ENCODE measurements at regions of chr17 and their contacts with region 1.

Region 1: GRCh38 chr17:42019509-42020404 is at the start of gene NKIRAS2:
- DNase-seq: peak; percentile 82 to 94 (median 94)
- ATAC-seq: peak; percentile 80
- H3K4me3 ChIP-seq: peak within 1 kb of the TSS; percentile 69 to 83
- H3K4me3 Mint-ChIP-seq: peak within 1 kb of the TSS; percentile 97
- H3K27ac ChIP-seq: peak within 1 kb of the TSS; percentile 34 to 76
- H3K27ac Mint-ChIP-seq: peak within 1 kb of the TSS; percentile 87
- H3K4me1 ChIP-seq: peaks cover 48% of the 10 kb centered on the region
- H3K4me1 Mint-ChIP-seq: peaks cover 62% of the 10 kb centered on the region
- H3K27me3 ChIP-seq: no peaks in the 10 kb centered on the region
- H3K27me3 Mint-ChIP-seq: no peaks in the 10 kb centered on the region
- CTCF ChIP-seq: peak; percentile 91
- total RNA-seq, gene NKIRAS2: 13.2 to 14.8 TPM

Region 2: DNA sequence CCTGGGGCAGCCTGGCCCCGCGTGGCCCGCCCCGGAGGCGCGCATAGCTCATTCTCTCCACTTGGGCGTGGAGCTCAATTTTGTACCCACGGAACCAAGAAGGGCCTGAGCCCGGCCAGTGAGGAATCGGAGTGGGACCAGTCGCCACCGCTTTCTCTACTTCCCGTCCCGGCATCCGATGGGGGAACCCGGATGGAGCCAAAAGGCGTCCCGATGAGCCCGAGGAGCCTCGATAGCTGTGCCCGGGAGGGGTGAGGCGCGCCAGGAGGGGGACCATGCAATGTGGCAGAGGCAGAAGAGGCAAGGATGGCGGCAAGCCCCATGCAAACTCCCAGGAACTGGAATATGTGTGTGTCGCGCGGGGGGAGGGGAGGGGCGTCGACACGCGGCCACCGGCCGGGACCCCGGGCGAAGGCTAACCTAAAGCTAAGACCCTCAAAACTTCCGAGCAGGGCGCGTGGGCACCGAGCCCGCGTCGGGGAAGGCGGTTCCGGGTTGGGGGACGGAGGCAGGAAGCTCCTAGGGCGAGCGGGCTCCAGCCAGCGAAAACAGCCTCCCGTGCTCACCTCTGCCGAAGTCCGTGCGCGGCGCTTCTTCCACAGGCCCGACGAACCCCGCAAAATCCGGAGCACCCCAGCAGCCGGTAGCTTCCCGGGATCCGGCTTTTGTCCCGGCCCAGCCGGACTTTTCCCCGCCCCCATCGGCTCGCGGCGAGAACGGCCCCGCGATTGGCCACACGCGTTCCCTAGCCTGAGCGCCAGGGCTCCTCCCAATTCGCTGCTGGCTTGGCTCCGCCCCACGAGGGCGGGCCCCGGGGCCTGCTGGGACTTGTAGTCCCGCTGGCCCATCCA is 101.2 kb before region 1 on chr17 and contains the start of gene ACLY:
- CTCF ChIA-PET with region 1: interaction called, 3 read pairs
- POLR2A ChIA-PET with region 1: interaction called, 4 read pairs
- intact Hi-C with region 1: loop called (anchors 2 to 5 kb)
- DNase-seq: peak; percentile 89 to 97 (median 95)
- ATAC-seq: peak; percentile 99
- H3K4me3 ChIP-seq: peak within 1 kb of the TSS; percentile 94 to 100
- H3K4me3 Mint-ChIP-seq: peak within 1 kb of the TSS; percentile 90
- H3K27ac ChIP-seq: peak within 1 kb of the TSS; percentile 82 to 86
- H3K27ac Mint-ChIP-seq: peak within 1 kb of the TSS; percentile 81
- H3K4me1 ChIP-seq: peaks cover 17% of the 10 kb centered on the region
- H3K4me1 Mint-ChIP-seq: peaks cover 32% of the 10 kb centered on the region
- H3K27me3 ChIP-seq: no peaks in the 10 kb centered on the region
- H3K27me3 Mint-ChIP-seq: no peaks in the 10 kb centered on the region
- CTCF ChIP-seq: no peak
- total RNA-seq, gene ACLY: 24.9 to 25.0 TPM

Region 3: GRCh38 chr17:42039794-42040763 is 20.3 kb after region 1 on chr17:
- CTCF ChIA-PET with region 1: interaction called, 23 read pairs
- POLR2A ChIA-PET with region 1: no interaction called
- intact Hi-C with region 1: no loop called
- DNase-seq: no peak
- ATAC-seq: no peak
- H3K4me3 ChIP-seq: no peak overlapping the region
- H3K4me3 Mint-ChIP-seq: no peak overlapping the region
- H3K27ac ChIP-seq: no peak overlapping the region
- H3K27ac Mint-ChIP-seq: no peak overlapping the region
- H3K4me1 ChIP-seq: no peaks in the 10 kb centered on the region
- H3K4me1 Mint-ChIP-seq: no peaks in the 10 kb centered on the region
- H3K27me3 ChIP-seq: no peaks in the 10 kb centered on the region
- H3K27me3 Mint-ChIP-seq: peaks cover 7% of the 10 kb centered on the region
- CTCF ChIP-seq: no peak

Region 4: GRCh38 chr17:42112552-42113176 is 92.9 kb after region 1 on chr17 and contains the start of gene DHX58:
- CTCF ChIA-PET with region 1: interaction called, 256 read pairs
- POLR2A ChIA-PET with region 1: interaction called, 32 read pairs
- intact Hi-C with region 1: no loop called
- DNase-seq: peak; percentile 65 to 94 (median 81)
- ATAC-seq: peak; percentile 80
- H3K4me3 ChIP-seq: peak within 1 kb of the TSS; percentile 66 to 88
- H3K4me3 Mint-ChIP-seq: peak within 1 kb of the TSS; percentile 92
- H3K27ac ChIP-seq: peak within 1 kb of the TSS; percentile 81 to 90
- H3K27ac Mint-ChIP-seq: peak within 1 kb of the TSS; percentile 95
- H3K4me1 ChIP-seq: peaks cover 30% of the 10 kb centered on the region
- H3K4me1 Mint-ChIP-seq: peaks cover 49% of the 10 kb centered on the region
- H3K27me3 ChIP-seq: no peaks in the 10 kb centered on the region
- H3K27me3 Mint-ChIP-seq: no peaks in the 10 kb centered on the region
- CTCF ChIP-seq: no peak
- total RNA-seq, gene DHX58: 32.8 to 39.1 TPM

Region 5: GRCh38 chr17:42312285-42313130 is 292.8 kb after region 1 on chr17:
- CTCF ChIA-PET with region 1: no interaction called
- POLR2A ChIA-PET with region 1: no interaction called
- intact Hi-C with region 1: loop called in 1 of 2 experiments (anchors 10 kb)
- DNase-seq: peak; percentile 45 to 89 (median 79)
- ATAC-seq: peak; percentile 61
- H3K4me3 ChIP-seq: peak overlapping the region; percentile 20 to 38
- H3K4me3 Mint-ChIP-seq: peak overlapping the region; percentile 74
- H3K27ac ChIP-seq: peak overlapping the region; percentile 31 to 66
- H3K27ac Mint-ChIP-seq: peak overlapping the region; percentile 86
- H3K4me1 ChIP-seq: peaks cover 69% of the 10 kb centered on the region
- H3K4me1 Mint-ChIP-seq: peaks cover 72% of the 10 kb centered on the region
- H3K27me3 ChIP-seq: no peaks in the 10 kb centered on the region
- H3K27me3 Mint-ChIP-seq: no peaks in the 10 kb centered on the region
- CTCF ChIP-seq: peak; percentile 62